Activated T-helper 1 cell treated with anti-CD3 and anti-CD28 coated beads, Interleukin-12 subunit alpha, Interleukin-12 subunit beta, Interleukin-2, Interleukin-4 antibody, amounts not matched to agents 30 ng/mL and 10 ng/mL and 1 ng/mL, durations not matched to agents 14 hours and 24 hours and 36 hours (primary cell): ENCODE measurements at regions of chr20 and their contacts with region 1.

Region 1: GRCh38 chr20:24100385-24101011 is 111.9 kb upstream of the GGTLC1 start:
- DNase-seq: peak; percentile 38
- H3K4me3 Mint-ChIP-seq: no peak overlapping the region
- H3K27ac Mint-ChIP-seq: peak overlapping the region; percentile 22
- H3K4me1 Mint-ChIP-seq: peaks cover 21% of the 10 kb centered on the region
- H3K27me3 Mint-ChIP-seq: peaks cover 7% of the 10 kb centered on the region

Region 2: GRCh38 chr20:23889775-23890211 is 210.7 kb before region 1 on chr20:
- intact Hi-C with region 1: loop called (anchors 1 kb)
- DNase-seq: peak; percentile 54
- H3K4me3 Mint-ChIP-seq: no peak overlapping the region
- H3K27ac Mint-ChIP-seq: no peak overlapping the region
- H3K4me1 Mint-ChIP-seq: no peaks in the 10 kb centered on the region
- H3K27me3 Mint-ChIP-seq: peaks cover under 1% of the 10 kb centered on the region

Region 3: DNA sequence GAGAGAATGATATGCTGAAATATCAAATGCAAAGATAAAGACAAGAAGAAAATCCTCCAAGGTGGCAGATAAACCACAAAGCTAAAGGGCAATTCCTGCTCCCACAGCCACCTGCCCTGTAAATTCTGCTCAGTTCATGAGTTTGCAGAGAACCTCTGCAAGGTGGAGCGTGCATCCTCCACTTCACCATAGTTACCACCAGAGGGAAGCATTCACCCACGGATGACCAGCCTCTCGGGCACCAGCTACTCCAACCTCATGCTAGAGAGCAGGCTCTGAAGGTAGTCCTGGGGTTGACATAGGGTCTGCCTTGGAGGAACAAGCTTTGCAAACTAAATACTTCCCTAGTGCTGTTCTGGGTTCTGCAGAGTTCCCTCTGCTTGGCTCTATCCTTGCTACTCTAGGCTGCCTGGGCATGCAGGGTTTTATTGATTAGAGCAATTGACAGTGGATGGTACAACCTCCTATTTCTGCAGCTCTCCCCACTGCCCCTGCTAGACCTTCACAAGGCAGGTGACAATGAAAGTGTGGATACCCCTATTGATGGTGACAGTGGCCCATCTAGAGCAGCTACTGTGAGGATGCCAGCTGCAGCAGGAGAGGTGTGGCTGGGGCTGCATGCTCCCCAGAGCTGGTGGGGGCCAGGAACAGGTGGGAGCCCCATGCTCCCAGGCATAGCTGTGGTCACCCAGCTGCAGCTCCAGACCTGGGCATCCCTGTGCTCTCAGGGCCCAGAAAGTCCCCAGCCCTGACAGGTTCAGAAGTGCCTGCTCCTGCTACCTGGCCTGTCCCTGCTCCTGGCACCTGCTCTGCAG is 163.0 kb before region 1 on chr20:
- intact Hi-C with region 1: loop called (anchors 1 kb)
- DNase-seq: peak; percentile 33
- H3K4me3 Mint-ChIP-seq: no peak overlapping the region
- H3K27ac Mint-ChIP-seq: no peak overlapping the region
- H3K4me1 Mint-ChIP-seq: no peaks in the 10 kb centered on the region
- H3K27me3 Mint-ChIP-seq: peaks cover 3% of the 10 kb centered on the region

Region 4: GRCh38 chr20:23995905-23996666 is 104.4 kb before region 1 on chr20:
- intact Hi-C with region 1: loop called (anchors 1 kb)
- DNase-seq: peak; percentile 6
- H3K4me3 Mint-ChIP-seq: no peak overlapping the region
- H3K27ac Mint-ChIP-seq: no peak overlapping the region
- H3K4me1 Mint-ChIP-seq: no peaks in the 10 kb centered on the region
- H3K27me3 Mint-ChIP-seq: peaks cover 22% of the 10 kb centered on the region

Region 5: GRCh38 chr20:24027229-24027628 is 73.3 kb before region 1 on chr20:
- intact Hi-C with region 1: loop called (anchors 1 kb)
- DNase-seq: peak; percentile 82
- H3K4me3 Mint-ChIP-seq: peak overlapping the region; percentile 50
- H3K27ac Mint-ChIP-seq: peak overlapping the region; percentile 86
- H3K4me1 Mint-ChIP-seq: peaks cover 56% of the 10 kb centered on the region
- H3K27me3 Mint-ChIP-seq: no peaks in the 10 kb centered on the region

Region 6: DNA sequence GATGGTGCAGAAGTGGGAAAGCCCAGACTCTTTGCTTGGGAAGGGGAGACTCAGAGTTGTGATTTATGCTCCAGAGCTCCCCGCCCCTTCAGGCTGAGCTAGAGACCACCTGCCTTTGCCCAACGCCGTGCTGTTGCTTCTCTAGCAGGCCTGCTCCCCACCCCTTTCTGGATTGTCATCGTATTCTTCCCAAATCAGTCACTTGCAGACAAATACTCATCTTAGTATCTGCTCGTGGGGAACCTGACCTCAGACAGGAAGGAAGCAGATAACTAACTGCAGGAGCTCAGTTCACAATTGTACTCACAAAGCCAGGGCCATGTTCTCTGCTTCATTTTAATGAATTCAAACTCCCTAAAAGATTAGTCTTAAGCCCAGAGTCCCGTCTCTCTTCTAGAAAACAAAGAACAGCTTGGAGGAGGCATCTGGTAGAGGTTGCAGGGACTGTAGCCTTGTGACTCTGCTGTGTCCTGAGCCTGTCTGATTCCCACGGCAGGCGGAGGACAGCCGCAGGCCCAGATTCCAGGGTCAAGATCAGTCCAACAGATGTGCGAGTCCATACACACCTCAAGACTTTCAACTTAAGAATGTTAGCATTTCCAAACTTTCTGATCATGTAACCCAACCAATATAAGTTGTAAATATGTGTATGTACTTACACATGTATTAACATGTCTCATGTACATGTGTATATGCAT is 54.7 kb before region 1 on chr20:
- intact Hi-C with region 1: loop called (anchors 1 kb)
- DNase-seq: peak; percentile 24
- H3K4me3 Mint-ChIP-seq: peak overlapping the region; percentile 3
- H3K27ac Mint-ChIP-seq: peak overlapping the region; percentile 79
- H3K4me1 Mint-ChIP-seq: peaks cover 49% of the 10 kb centered on the region
- H3K27me3 Mint-ChIP-seq: no peaks in the 10 kb centered on the region

Region 7: DNA sequence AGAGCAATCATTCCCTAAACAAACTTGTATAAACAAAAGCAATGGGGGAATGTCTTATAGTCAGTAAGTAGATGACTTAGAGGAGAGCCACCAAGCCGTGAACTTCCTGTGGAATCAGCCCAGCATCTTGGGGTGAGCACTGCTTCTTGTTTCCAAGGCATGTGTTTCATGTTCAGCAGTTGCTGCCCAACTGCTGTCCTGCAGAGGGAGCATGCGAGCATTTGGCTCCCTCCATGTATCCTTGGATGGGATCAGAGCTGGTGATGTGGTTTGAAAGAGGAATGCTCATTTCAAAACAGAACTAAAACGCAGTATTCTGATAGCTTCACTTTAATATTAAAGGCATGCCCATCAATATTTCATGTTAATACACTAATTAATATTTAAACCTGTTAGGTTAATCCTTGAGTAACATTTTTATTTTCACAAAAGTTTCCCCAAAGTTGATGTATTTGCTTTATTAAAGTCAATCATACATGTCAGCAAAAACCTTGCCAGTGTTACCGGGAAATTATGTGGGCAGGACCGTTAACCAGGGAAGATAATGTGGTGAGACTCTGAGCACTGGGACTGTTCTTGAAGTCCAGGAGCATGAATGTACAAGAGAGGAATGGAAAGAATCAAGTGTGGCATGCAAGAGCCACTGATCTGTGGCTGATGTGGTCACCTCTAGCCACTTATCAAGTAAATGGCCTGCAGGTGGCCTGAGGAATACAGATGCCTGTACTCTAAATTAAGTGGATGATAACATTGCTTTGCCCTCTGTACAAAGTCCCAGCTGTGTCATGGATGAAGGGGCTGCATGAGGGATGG is 60.3 kb after region 1 on chr20:
- intact Hi-C with region 1: loop called (anchors 5 kb)
- DNase-seq: no peak
- H3K4me3 Mint-ChIP-seq: no peak overlapping the region
- H3K27ac Mint-ChIP-seq: no peak overlapping the region
- H3K4me1 Mint-ChIP-seq: peaks cover 8% of the 10 kb centered on the region
- H3K27me3 Mint-ChIP-seq: no peaks in the 10 kb centered on the region

Region 8: GRCh38 chr20:24283186-24283585 is 182.7 kb after region 1 on chr20:
- intact Hi-C with region 1: no loop called
- DNase-seq: no peak
- H3K4me3 Mint-ChIP-seq: no peak overlapping the region
- H3K27ac Mint-ChIP-seq: no peak overlapping the region
- H3K4me1 Mint-ChIP-seq: no peaks in the 10 kb centered on the region
- H3K27me3 Mint-ChIP-seq: peaks cover 7% of the 10 kb centered on the region

Region 9: GRCh38 chr20:24402188-24402587 is 301.7 kb after region 1 on chr20:
- intact Hi-C with region 1: no loop called
- DNase-seq: no peak
- H3K4me3 Mint-ChIP-seq: no peak overlapping the region
- H3K27ac Mint-ChIP-seq: no peak overlapping the region
- H3K4me1 Mint-ChIP-seq: peaks cover 14% of the 10 kb centered on the region
- H3K27me3 Mint-ChIP-seq: peaks cover 3% of the 10 kb centered on the region